AG04449 (cell line): ENCODE measurements at regions of chr17 and their contacts with region 1.

Region 1: DNA sequence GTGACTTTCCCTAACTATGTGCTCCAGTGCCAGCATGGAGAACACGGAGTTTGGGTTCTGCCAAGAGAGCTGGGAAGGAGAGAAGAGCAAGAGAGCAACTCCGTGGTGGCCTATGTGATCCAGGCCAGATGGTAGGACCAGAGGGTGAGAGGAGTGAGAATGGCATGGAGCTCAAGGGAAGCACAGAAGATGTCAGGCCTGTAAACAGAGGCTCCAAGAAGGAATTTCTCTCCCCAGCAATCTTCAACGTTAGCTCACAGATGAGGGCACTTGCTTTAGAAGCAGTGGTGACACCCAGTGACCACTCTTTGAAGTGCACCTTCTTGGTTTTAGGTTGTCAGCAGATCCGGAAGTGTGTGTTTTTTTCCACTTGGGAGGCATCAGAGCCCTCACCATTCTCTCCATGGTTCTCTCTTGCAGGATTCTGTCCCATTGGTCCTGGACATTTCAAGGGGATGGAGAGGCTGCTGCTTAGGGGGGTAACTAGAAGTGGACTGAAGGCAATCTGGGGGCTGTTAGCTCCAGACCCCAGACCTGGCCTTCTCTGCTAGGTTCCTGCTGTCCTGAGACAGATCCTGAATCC is 18.1 kb upstream of the TMEM98 start:
- DNase-seq: peak; percentile 49
- H3K4me3 ChIP-seq: no peak overlapping the region
- CTCF ChIP-seq: peak; percentile 78

Region 2: GRCh38 chr17:32921017-32921416 is 11.1 kb after region 1 on chr17:
- CTCF ChIA-PET with region 1: interaction called, 13 read pairs
- POLR2A ChIA-PET with region 1: no interaction called
- DNase-seq: no peak
- H3K4me3 ChIP-seq: no peak overlapping the region
- CTCF ChIP-seq: no peak

Region 3: DNA sequence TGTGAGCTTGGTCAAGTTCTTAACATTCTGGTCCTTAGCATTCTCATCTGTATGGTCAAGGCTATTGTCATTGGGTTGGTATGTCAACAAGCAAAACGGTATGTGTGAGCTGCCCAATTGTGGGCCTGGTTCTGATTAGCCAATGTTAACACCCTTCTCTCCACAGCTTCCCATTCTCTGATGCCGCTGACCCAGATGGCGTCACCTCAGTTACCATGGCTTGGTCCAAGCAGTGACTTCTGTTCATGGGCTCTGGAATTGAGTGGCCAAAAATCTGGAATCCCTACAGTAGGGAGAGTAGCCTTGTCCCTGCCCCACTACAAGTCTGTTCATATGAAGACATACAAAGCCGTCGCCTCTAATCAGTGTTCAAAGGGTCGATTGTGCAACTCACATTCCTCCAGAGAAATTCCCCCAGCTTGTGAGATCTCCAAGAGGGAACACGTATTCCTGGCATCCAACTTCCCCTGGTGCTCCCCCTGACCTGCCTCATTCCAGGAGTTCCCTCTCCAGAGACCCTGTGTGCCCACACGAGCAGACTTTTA is 33.8 kb after region 1 on chr17:
- CTCF ChIA-PET with region 1: no interaction called
- POLR2A ChIA-PET with region 1: no interaction called
- DNase-seq: peak; percentile 59
- H3K4me3 ChIP-seq: no peak overlapping the region
- CTCF ChIP-seq: no peak